PC-3 (cell line): ENCODE measurements at regions of chr19 and their contacts with region 1.

Region 1: DNA sequence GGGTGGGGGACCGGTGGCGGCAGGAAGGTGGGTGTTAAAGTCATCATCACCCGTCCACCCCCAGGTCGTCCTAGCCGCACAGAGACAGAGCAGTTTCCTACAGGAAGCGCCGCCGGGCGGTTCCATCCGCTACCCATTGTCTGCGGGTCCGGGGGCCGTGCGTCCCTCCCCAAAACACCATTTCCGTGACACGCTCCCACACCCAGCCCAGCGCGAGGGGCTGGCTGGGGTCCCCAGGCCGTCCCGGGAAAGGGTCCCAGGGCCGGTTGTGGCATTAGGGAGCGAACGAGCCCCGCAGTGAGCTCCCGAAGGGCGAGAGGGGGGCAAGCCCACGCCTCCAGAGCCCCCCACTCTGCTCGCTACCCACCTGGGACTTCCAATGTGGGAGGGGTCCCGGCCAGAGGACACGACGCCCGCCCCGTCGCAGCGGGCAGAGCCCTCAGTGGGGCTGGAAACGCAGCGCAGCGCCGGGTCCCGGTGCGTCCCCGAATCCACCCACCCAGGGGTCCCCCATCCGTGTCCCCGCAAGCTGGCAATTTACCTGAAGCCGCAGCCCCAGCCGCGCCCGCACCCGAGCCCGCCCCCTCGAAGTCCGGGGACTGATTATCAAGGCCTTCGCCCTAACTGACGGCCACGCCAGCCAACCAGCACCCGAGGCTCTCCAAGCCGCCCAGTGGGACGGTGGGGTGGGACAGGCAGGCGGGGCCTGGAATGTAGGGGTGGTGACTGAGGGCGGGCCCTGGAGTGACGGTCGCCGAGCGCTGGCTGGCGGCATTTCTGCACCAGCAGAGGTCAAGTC is at the start of gene KANK3:
- DNase-seq: peak; percentile 99
- ATAC-seq: peak; percentile 100
- H3K4me3 ChIP-seq: peak within 1 kb of the TSS; percentile 69
- H3K27ac ChIP-seq: no peak within 1 kb of the TSS
- H3K4me1 ChIP-seq: 0 out of 2 replicates have a peak, but pooled peaks cover 4% of the 10 kb centered on the region
- H3K27me3 ChIP-seq: no peaks in the 10 kb centered on the region
- CTCF ChIP-seq: no peak
- total RNA-seq, gene KANK3: 0.81 and 0.87 TPM in 2 replicates

Region 2: GRCh38 chr19:8321060-8321985 is 21.6 kb before region 1 on chr19 and contains the starts of genes NDUFA7 and RPS28:
- CTCF ChIA-PET with region 1: interaction called, 4 read pairs
- POLR2A ChIA-PET with region 1: interaction called, 14 read pairs
- intact Hi-C with region 1: no loop called
- DNase-seq: peak; percentile 99
- ATAC-seq: peak; percentile 84
- H3K4me3 ChIP-seq: peak within 1 kb of the TSS; percentile 99
- H3K27ac ChIP-seq: peak within 1 kb of the TSS; percentile 63
- H3K4me1 ChIP-seq: peaks cover 19% of the 10 kb centered on the region
- H3K27me3 ChIP-seq: no peaks in the 10 kb centered on the region
- CTCF ChIP-seq: peak; percentile 38; the same call in 1 of the 2 replicates
- total RNA-seq, gene NDUFA7: 98.5 and 144 TPM in 2 replicates
- total RNA-seq, gene RPS28: 2,594 and 2,746 TPM in 2 replicates

Region 3: GRCh38 chr19:8552810-8553209 is 209.9 kb after region 1 on chr19:
- CTCF ChIA-PET with region 1: interaction called, 10 read pairs
- POLR2A ChIA-PET with region 1: no interaction called
- intact Hi-C with region 1: no loop called
- DNase-seq: peak; percentile 40
- ATAC-seq: peak; percentile 49
- H3K4me3 ChIP-seq: no peak overlapping the region
- H3K27ac ChIP-seq: no peak overlapping the region
- H3K4me1 ChIP-seq: no peaks in the 10 kb centered on the region
- H3K27me3 ChIP-seq: no peaks in the 10 kb centered on the region
- CTCF ChIP-seq: no peak

Region 4: GRCh38 chr19:8585894-8586750 is 243.2 kb after region 1 on chr19:
- CTCF ChIA-PET with region 1: interaction called, 16 read pairs
- POLR2A ChIA-PET with region 1: no interaction called
- intact Hi-C with region 1: no loop called
- DNase-seq: peak; percentile 85
- ATAC-seq: peak; percentile 81
- H3K4me3 ChIP-seq: no peak overlapping the region
- H3K27ac ChIP-seq: no peak overlapping the region
- H3K4me1 ChIP-seq: no peaks in the 10 kb centered on the region
- H3K27me3 ChIP-seq: peaks cover 13% of the 10 kb centered on the region; the same call in 1 of the 2 replicates
- CTCF ChIP-seq: peak; percentile 94